ENCODE measurements at regions of chr17 and their contacts with region 1.

Region 1: GRCh38 chr17:73362697-73363096 is 50.9 kb upstream of the CDC42EP4 start:
- DNase-seq: no peak
- H3K4me3 ChIP-seq: no peak overlapping the region
- H3K27me3 ChIP-seq: no peaks in the 10 kb centered on the region; the same call in 1 of the 2 replicates
- CTCF ChIP-seq: no peak

Region 2: GRCh38 chr17:73231841-73232586 is 130.7 kb before region 1 on chr17:
- CTCF ChIA-PET with region 1: no interaction called
- POLR2A ChIA-PET with region 1: no interaction called
- DNase-seq: peak; percentile 58
- H3K4me3 ChIP-seq: peak overlapping the region; percentile 98
- H3K27me3 ChIP-seq: no peaks in the 10 kb centered on the region
- CTCF ChIP-seq: peak; percentile 35; the same call in 1 of the 2 replicates

Region 3: GRCh38 chr17:73436954-73437353 is 74.3 kb after region 1 on chr17:
- CTCF ChIA-PET with region 1: no interaction called
- POLR2A ChIA-PET with region 1: interaction called, 13 read pairs
- DNase-seq: no peak
- H3K4me3 ChIP-seq: no peak overlapping the region
- H3K27me3 ChIP-seq: no peaks in the 10 kb centered on the region
- CTCF ChIP-seq: no peak